ENCODE measurements at regions of chr6 and their contacts with region 1.

Region 1: DNA sequence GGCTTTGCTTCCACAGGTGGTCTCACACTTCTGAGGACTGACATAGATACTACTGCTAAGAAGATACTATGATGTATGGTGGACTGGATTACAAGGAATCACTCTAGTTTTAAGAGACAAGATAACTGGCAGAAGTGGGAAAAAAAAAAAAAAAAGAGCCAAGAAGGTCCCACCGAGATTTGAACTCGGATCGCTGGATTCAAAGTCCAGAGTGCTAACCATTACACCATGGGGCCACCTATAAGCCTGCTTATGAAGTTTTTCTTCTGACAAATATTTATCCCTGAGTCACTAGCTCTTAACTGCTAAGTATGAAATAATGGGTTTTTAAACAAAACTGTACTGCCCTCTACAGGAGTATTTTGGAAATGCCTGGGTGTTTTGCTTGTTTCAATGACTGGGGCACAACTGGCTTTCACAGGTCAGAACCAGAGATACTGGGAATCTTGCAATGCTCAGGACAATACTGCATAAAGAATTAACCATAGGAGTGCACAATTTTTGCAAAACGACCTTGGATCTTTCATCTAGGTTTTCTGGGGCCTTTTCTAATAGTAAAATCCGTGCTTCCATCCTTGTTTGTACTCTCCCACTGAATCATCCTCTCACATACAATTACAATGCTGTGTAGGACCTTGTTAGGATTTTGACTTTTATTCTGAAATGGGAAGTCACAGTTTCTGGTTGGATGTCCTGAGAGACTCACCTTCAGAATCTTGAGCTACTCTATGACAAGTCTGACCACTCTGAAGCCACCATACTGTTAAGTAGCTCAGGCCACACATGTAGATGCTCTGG is 116.3 kb downstream of the OR2B2 start:
- DNase-seq: peak; percentile 88
- H3K4me3 ChIP-seq: peak overlapping the region; percentile 33
- H3K27ac ChIP-seq: peak overlapping the region; percentile 32
- H3K4me1 ChIP-seq: peaks cover 33% of the 10 kb centered on the region
- CTCF ChIP-seq: peak; percentile 88

Region 2: GRCh38 chr6:27687154-27688013 is 108.5 kb before region 1 on chr6:
- CTCF ChIA-PET with region 1: no interaction called
- POLR2A ChIA-PET with region 1: interaction called, 5 read pairs
- intact Hi-C with region 1: loop called (anchors 2 kb)
- DNase-seq: peak; percentile 87
- H3K4me3 ChIP-seq: peak overlapping the region; percentile 67
- H3K27ac ChIP-seq: peak overlapping the region; percentile 41
- H3K4me1 ChIP-seq: no peaks in the 10 kb centered on the region
- CTCF ChIP-seq: peak; percentile 83

Region 3: DNA sequence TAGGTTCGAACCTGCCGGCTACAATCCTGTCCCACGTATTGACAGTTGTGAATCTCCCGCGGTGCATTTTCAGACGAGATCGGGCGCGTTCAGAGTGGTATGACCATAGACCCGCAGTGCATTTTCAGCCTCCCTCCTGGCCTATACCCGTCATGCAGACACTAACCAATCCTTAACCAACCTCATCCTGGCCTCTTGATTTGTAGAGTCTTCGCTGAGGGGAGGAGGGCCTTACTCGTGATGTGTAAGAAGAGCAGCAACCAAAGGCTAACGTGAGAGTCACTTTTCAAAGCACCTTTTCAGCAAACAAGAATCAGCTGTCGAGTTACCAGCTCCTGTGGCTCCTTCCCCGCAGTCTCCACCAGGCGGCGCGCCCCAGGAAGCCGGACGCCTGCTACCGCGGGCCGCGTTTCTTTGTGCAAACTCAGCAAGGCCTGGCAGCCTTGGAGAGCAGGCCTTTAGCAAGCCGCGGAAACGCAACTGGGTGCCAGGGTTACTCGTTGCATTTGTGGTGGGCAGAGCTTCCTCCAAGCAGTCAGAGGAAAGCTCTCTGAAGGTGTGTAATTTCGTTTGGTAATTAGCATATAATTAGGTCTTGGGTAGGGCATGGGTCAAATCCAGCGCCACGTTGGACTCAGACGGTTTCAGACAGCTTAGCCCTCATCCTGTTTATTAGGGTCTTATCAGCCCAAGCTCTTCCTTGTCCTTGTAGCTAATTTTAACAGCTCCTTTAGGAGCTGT is 23.5 kb before region 1 on chr6:
- CTCF ChIA-PET with region 1: interaction called, 17 read pairs
- POLR2A ChIA-PET with region 1: interaction called, 6 read pairs
- intact Hi-C with region 1: loop called (anchors 1 kb)
- DNase-seq: peak; percentile 80
- H3K4me3 ChIP-seq: no peak overlapping the region
- H3K27ac ChIP-seq: no peak overlapping the region
- H3K4me1 ChIP-seq: peaks cover 8% of the 10 kb centered on the region
- CTCF ChIP-seq: peak; percentile 87

Region 4: GRCh38 chr6:28124102-28124970 is 328.4 kb after region 1 on chr6 and contains the start of gene ZSCAN16:
- CTCF ChIA-PET with region 1: no interaction called
- POLR2A ChIA-PET with region 1: no interaction called
- intact Hi-C with region 1: no loop called
- DNase-seq: peak; percentile 85
- H3K4me3 ChIP-seq: peak within 1 kb of the TSS; percentile 73
- H3K27ac ChIP-seq: peak within 1 kb of the TSS; percentile 48
- H3K4me1 ChIP-seq: peaks cover 36% of the 10 kb centered on the region
- CTCF ChIP-seq: no peak
- total RNA-seq, gene ZSCAN16: 8.6 and 10.8 TPM in 2 replicates

Measured in OCI-LY7 (cell line).